Activated CD4-positive, alpha-beta memory T cell treated with anti-CD3 and anti-CD28 coated beads for 36 hours (primary cell): ENCODE measurements at regions of chr16 and their contacts with region 1.

Region 1: GRCh38 chr16:84607694-84608093 is 10.2 kb downstream of the COTL1 start:
- DNase-seq: no peak
- H3K4me3 Mint-ChIP-seq: peak overlapping the region; percentile 46
- H3K27ac Mint-ChIP-seq: peak overlapping the region; percentile 83
- H3K4me1 Mint-ChIP-seq: peaks cover 93% of the 10 kb centered on the region
- H3K27me3 Mint-ChIP-seq: no peaks in the 10 kb centered on the region

Region 2: DNA sequence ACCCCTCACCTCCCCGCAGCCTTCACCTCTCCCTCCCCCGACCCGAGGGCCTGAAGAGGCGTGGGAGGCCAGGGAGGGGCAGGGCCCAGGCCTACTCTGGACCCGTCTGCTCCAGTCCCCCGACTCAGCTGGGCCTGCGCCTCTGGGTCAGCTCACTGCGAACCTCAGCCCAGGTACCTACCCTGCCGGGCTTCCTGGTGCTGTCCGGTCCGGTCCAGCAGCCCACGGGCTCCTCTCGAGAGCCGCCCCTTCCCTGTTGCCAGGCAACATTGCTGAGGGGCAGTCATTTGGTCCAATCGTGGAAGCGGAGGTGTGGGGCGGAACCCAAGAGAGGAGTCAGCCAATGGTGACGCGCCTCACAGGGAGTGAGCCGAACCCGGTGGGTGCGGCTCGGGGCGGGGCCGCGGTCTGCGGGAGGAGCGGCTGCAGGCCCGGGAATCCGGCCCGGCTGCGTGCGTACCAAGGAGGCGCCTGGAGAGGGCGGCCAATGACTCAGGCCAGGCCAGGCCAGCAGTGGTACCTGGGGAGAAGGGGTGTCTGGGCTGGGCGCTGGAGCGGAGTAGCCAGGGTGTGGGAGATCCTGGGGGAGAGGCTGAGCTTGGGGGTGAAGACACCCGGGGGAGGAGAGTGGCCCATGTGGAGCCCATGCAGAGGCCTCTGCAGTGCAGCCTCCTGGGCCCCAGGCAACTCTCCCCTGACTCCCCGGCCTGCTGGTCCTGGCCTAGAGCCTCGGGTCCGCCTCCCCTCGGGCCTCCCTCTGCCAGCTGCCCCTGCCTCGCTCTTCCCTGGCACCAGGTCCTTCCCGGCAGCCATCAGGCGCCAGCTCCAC is 103.1 kb before region 1 on chr16 and contains the start of gene MEAK7:
- CTCF ChIA-PET with region 1: interaction called, 13 read pairs
- POLR2A ChIA-PET with region 1: no interaction called
- intact Hi-C with region 1: no loop called
- DNase-seq: peak; percentile 99
- H3K4me3 Mint-ChIP-seq: peak within 1 kb of the TSS; percentile 86
- H3K27ac Mint-ChIP-seq: peak within 1 kb of the TSS; percentile 87
- H3K4me1 Mint-ChIP-seq: peaks cover 51% of the 10 kb centered on the region
- H3K27me3 Mint-ChIP-seq: no peaks in the 10 kb centered on the region
- total RNA-seq, gene MEAK7: 12.9 to 13.6 TPM

Region 3: GRCh38 chr16:84714028-84714427 is 106.3 kb after region 1 on chr16:
- CTCF ChIA-PET with region 1: no interaction called
- POLR2A ChIA-PET with region 1: no interaction called
- intact Hi-C with region 1: no loop called
- DNase-seq: no peak
- H3K4me3 Mint-ChIP-seq: no peak overlapping the region
- H3K27ac Mint-ChIP-seq: no peak overlapping the region
- H3K4me1 Mint-ChIP-seq: peaks cover 71% of the 10 kb centered on the region
- H3K27me3 Mint-ChIP-seq: no peaks in the 10 kb centered on the region